Activated CD4-positive, alpha-beta memory T cell treated with anti-CD3 and anti-CD28 coated beads for 36 hours (primary cell): ENCODE measurements at regions of chr1 and their contacts with region 1.

Region 1: GRCh38 chr1:212699104-212699624 is 476 bp downstream of the BATF3 start:
- DNase-seq: peak; percentile 79
- H3K4me3 Mint-ChIP-seq: peak overlapping the region; percentile 90
- H3K27ac Mint-ChIP-seq: peak overlapping the region; percentile 95
- H3K4me1 Mint-ChIP-seq: peaks cover 71% of the 10 kb centered on the region
- H3K27me3 Mint-ChIP-seq: peaks cover 2% of the 10 kb centered on the region

Region 2: DNA sequence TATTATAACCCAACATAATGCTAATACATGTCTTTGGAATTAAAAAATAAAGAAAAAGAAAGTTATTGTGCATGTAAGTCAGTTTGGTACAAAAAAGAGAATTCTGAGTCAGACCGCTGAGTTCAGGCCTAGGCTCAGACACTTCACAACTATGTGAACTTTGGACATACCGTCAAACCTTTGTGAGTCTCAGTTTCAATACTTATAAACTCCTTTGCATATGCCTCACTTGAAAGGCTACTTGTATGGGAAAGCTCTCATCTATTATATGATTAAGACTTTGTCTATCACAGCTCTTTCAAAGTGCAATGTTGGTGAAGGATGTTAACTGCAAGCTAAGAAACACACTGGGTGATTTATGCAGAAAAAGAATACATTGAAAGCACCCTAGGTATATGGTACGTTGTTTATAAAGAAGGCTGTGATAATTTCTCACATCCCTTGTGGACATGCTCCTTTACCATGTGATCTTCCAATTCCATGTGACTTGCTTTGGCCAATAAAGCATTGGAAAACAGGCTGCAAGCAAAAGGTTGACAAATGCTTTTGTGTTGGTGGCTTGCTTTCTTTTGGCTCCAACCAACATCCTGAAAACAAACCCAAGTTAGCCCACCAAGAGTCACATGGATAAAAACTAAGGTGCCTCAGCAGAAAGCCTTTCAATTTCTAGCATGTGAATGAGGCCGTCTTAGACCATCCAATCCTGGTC is 713.5 kb before region 1 on chr1:
- CTCF ChIA-PET with region 1: no interaction called
- POLR2A ChIA-PET with region 1: no interaction called
- intact Hi-C with region 1: no loop called
- DNase-seq: no peak
- H3K4me3 Mint-ChIP-seq: no peak overlapping the region
- H3K27ac Mint-ChIP-seq: no peak overlapping the region
- H3K4me1 Mint-ChIP-seq: no peaks in the 10 kb centered on the region
- H3K27me3 Mint-ChIP-seq: no peaks in the 10 kb centered on the region

Region 3: DNA sequence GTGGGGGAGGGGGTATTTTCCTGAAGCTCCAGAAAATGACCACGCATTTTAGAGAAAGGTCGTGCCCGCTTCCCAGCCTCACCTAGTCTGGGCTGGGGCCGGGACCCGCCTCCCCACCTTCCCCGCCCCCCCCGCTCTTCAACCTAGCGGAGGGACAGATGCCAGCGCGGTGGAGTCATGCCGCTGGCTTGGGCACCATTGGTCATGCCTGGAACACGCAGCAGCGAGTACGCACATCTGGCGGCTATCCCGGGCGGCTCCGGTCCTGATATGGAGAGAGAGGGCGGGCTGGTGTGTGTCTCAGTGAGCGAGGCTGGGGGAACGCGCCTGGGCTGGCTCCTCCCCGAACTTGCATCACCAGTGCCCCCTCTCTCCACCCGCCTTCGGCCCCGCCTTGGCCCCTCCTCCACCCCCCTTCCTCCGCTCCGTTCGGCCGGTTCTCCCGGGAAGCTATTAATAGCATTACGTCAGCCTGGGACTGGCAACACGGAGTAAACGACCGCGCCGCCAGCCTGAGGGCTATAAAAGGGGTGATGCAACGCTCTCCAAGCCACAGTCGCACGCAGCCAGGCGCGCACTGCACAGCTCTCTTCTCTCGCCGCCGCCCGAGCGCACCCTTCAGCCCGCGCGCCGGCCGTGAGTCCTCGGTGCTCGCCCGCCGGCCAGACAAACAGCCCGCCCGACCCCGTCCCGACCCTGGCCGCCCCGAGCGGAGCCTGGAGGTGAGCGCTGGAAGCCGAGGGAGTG is 90.8 kb before region 1 on chr1 and contains the start of gene ATF3:
- CTCF ChIA-PET with region 1: no interaction called
- POLR2A ChIA-PET with region 1: interaction called, 5 read pairs
- intact Hi-C with region 1: loop called (anchors 2 kb)
- DNase-seq: peak; percentile 97
- H3K4me3 Mint-ChIP-seq: peak within 1 kb of the TSS; percentile 91
- H3K27ac Mint-ChIP-seq: peak within 1 kb of the TSS; percentile 90
- H3K4me1 Mint-ChIP-seq: peaks cover 52% of the 10 kb centered on the region
- H3K27me3 Mint-ChIP-seq: peaks cover 36% of the 10 kb centered on the region
- total RNA-seq, gene ATF3: 49.7 to 51.5 TPM

Region 4: DNA sequence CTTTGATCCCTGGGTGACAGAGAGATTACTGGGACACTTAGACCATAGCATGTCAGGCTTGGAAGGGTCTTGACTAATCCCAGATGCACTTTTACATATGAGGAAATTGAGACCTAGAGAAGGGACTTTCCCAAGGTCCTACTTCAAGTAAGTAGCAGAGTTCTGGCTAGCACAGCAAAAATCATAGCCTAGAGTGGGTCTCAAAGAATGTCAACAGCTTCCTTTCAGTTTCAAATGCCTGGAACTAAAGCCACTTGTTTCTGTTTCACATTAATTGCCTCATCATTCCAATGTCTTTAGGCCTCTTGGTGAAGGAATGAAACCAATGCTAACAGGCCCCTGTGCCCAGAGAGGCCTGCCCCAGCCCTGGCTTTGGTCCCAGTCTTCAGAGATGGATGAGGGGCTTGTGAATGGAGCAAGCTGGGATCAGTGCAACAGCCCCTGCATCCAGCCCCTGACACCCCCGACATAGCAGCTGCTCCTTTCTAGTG is 64.0 kb before region 1 on chr1:
- CTCF ChIA-PET with region 1: no interaction called
- POLR2A ChIA-PET with region 1: no interaction called
- intact Hi-C with region 1: no loop called
- DNase-seq: no peak
- H3K4me3 Mint-ChIP-seq: no peak overlapping the region
- H3K27ac Mint-ChIP-seq: peak overlapping the region; percentile 40
- H3K4me1 Mint-ChIP-seq: peaks cover 33% of the 10 kb centered on the region
- H3K27me3 Mint-ChIP-seq: peaks cover 3% of the 10 kb centered on the region

Region 5: GRCh38 chr1:212683357-212683722 is 15.8 kb before region 1 on chr1:
- CTCF ChIA-PET with region 1: interaction called, 5 read pairs
- POLR2A ChIA-PET with region 1: interaction called, 5 read pairs
- intact Hi-C with region 1: loop called (anchors 1 kb)
- DNase-seq: peak; percentile 90
- H3K4me3 Mint-ChIP-seq: peak overlapping the region; percentile 40
- H3K27ac Mint-ChIP-seq: peak overlapping the region; percentile 89
- H3K4me1 Mint-ChIP-seq: peaks cover 58% of the 10 kb centered on the region
- H3K27me3 Mint-ChIP-seq: peaks cover 2% of the 10 kb centered on the region

Region 6: DNA sequence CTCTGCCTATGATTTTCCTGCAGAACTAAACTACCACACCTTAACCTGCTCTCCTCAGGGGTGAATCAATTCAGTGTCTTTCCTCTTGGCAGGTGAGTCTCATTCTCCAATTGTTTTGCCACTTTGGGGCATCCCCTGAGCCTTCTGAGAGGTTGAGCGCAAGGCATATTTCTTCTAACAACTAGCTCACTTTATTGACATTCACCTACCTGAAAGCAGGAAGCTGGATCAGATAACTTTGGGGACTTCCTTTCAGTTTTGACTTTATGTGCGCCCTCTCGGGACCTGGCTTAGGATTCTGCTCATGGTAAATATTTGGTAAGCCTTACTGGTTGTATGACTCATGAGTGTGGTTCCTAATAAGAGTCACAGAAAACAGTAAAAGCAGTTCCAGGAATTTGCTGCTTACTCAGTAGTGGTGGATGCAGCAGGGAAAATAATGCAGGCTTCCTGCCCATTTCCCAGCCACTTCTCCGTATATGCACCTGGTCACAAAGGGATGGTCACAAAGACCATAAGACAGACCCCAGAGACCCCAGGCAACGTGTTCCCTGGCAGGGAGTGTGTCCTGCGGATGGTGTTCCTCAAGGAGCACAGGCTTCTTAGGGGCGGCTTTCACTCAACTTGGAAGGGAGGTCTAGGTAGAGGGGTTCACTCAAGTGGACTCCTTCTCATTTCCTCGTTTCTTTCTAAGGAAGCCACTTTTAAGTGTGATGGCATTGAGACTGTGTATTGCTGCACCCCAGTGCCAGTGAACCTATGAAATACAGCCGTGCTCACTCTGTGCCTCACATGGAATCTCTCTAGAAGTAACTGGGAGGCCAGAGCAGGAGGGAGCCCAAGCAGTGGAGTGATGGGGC is 22.5 kb after region 1 on chr1:
- CTCF ChIA-PET with region 1: interaction called, 22 read pairs
- POLR2A ChIA-PET with region 1: interaction called, 31 read pairs
- intact Hi-C with region 1: loop called (anchors 1 kb)
- DNase-seq: peak; percentile 77
- H3K4me3 Mint-ChIP-seq: peak overlapping the region; percentile 63
- H3K27ac Mint-ChIP-seq: peak overlapping the region; percentile 94
- H3K4me1 Mint-ChIP-seq: peaks cover 58% of the 10 kb centered on the region
- H3K27me3 Mint-ChIP-seq: peaks cover 3% of the 10 kb centered on the region

Region 7: GRCh38 chr1:212749821-212750535 is 50.8 kb after region 1 on chr1:
- CTCF ChIA-PET with region 1: interaction called, 15 read pairs
- POLR2A ChIA-PET with region 1: interaction called, 6 read pairs
- intact Hi-C with region 1: loop called (anchors 1 kb)
- DNase-seq: peak; percentile 27
- H3K4me3 Mint-ChIP-seq: peak overlapping the region; percentile 45
- H3K27ac Mint-ChIP-seq: peak overlapping the region; percentile 81
- H3K4me1 Mint-ChIP-seq: peaks cover 73% of the 10 kb centered on the region
- H3K27me3 Mint-ChIP-seq: no peaks in the 10 kb centered on the region

Region 8: DNA sequence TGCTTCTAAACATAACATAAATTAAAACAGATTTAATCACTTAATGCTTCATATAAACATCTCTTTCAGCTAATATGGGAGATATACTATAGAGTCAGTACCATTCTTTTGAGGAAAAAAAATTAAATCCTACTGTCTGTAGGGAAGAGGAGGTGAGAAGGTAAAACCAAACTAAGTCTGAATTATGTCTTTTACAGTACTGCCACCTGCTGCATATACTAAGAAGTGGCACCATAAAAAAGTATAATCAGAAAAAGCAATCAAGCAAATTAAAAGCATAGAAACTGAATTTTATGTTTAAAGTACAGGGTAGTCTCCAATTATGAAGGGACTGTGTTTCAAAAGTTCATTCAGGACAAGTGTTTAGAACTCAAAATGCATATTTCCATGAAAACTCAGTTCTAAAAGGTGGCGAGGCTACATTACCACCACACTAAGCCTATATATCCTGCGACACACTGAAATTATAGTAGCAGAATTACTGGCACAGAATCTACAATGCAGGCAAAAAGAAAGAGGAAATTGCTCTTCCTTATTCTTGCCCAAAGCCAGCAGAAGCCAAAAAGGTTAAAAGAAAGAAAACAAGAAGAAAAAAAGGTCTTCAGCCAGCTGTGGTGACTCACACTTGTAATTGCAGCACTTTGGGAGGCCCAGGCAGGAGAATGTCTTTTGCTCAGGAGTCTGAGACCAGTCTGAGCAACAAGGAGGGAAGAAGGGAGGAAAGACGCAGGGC is 83.4 kb after region 1 on chr1:
- CTCF ChIA-PET with region 1: interaction called, 15 read pairs
- POLR2A ChIA-PET with region 1: no interaction called
- intact Hi-C with region 1: loop called (anchors 1 kb)
- DNase-seq: no peak
- H3K4me3 Mint-ChIP-seq: no peak overlapping the region
- H3K27ac Mint-ChIP-seq: peak overlapping the region; percentile 6
- H3K4me1 Mint-ChIP-seq: peaks cover 37% of the 10 kb centered on the region
- H3K27me3 Mint-ChIP-seq: no peaks in the 10 kb centered on the region